ENCODE measurements at regions of chr3 and their contacts with region 1.

Region 1: GRCh38 chr3:161274719-161275298 is 53.7 kb downstream of the NMD3 start:
- DNase-seq: peak in 1 of 2 experiments; percentile 39
- ATAC-seq: peak in 1 of 2 experiments; percentile 53; a peak in 3 of 6 replicates
- H3K4me3 ChIP-seq: no peak overlapping the region
- H3K27ac ChIP-seq: no peak overlapping the region
- H3K4me1 ChIP-seq: no peaks in the 10 kb centered on the region
- CTCF ChIP-seq: peak; percentile 26; the same call in 1 of the 3 replicates
- EP300 ChIP-seq: no peak
- POLR2A ChIP-seq: no peak
- RAD21 ChIP-seq: peak; percentile 4 to 42; a peak in 2 of 5 replicates

Region 2: GRCh38 chr3:160830792-160831191 is 444.0 kb before region 1 on chr3:
- CTCF ChIA-PET with region 1: no interaction called
- POLR2A ChIA-PET with region 1: no interaction called
- DNase-seq: no peak
- ATAC-seq: no peak
- H3K4me3 ChIP-seq: no peak overlapping the region
- H3K27ac ChIP-seq: no peak overlapping the region
- H3K4me1 ChIP-seq: no peaks in the 10 kb centered on the region
- CTCF ChIP-seq: no peak
- EP300 ChIP-seq: no peak
- POLR2A ChIP-seq: no peak
- RAD21 ChIP-seq: no peak

Region 3: GRCh38 chr3:161291195-161291912 is 16.5 kb after region 1 on chr3:
- CTCF ChIA-PET with region 1: interaction called, 10 read pairs
- POLR2A ChIA-PET with region 1: no interaction called
- DNase-seq: no peak
- ATAC-seq: no peak
- H3K4me3 ChIP-seq: no peak overlapping the region
- H3K27ac ChIP-seq: no peak overlapping the region
- H3K4me1 ChIP-seq: no peaks in the 10 kb centered on the region
- CTCF ChIP-seq: no peak
- EP300 ChIP-seq: no peak
- POLR2A ChIP-seq: no peak
- RAD21 ChIP-seq: no peak

Region 4: DNA sequence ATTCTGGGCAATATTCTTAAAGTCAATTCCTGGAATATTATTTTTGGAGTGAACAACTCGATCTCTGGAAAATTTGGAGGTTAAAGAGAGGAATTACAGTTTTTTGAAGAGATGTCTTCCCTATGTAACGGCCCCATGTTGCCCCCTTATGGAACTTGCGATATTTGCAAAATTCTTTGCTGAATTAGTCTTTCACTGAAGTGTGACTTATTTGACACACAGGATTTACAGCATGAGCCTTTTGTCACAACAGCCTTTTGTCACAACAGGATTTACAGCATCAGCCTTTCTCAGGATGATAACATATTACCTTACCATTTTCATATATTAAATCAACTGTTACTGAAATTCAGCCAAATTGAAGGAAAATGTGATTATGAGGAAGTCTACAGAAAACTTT is 134.3 kb after region 1 on chr3:
- CTCF ChIA-PET with region 1: interaction called, 13 read pairs
- POLR2A ChIA-PET with region 1: no interaction called
- DNase-seq: peak; percentile 14 to 58
- ATAC-seq: peak in 1 of 2 experiments; percentile 72; a peak in 3 of 6 replicates
- H3K4me3 ChIP-seq: no peak overlapping the region
- H3K27ac ChIP-seq: no peak overlapping the region
- H3K4me1 ChIP-seq: peaks cover 15% of the 10 kb centered on the region; the same call in 1 of the 3 replicates
- CTCF ChIP-seq: peak; percentile 74
- EP300 ChIP-seq: no peak
- POLR2A ChIP-seq: no peak
- RAD21 ChIP-seq: peak; percentile 80 to 82

Region 5: DNA sequence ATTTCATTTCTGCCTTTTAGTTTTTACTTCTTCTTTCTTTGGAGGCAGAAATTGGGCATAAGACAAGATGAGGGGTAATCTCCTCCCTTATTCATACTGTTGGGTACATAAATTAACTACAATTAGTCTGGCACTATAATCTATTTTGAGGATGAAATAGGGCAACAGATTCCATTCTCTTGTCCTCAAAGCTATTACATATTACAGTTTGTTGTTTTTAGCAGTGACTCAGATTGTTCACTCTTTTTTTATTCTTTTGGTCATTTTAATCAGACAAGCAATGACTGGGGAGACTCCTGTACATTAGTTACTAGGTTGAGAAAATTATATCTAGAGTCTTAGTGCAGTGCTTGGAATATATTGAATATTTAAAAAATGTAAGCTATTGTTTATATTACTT is 777.8 kb after region 1 on chr3:
- CTCF ChIA-PET with region 1: no interaction called
- POLR2A ChIA-PET with region 1: no interaction called
- DNase-seq: no peak
- ATAC-seq: no peak
- H3K4me3 ChIP-seq: no peak overlapping the region
- H3K27ac ChIP-seq: no peak overlapping the region
- H3K4me1 ChIP-seq: no peaks in the 10 kb centered on the region
- CTCF ChIP-seq: no peak
- EP300 ChIP-seq: no peak
- POLR2A ChIP-seq: no peak
- RAD21 ChIP-seq: no peak

Measured in A549 (cell line).